ENCODE measurements at regions of chr12 and their contacts with region 1.

Region 1: DNA sequence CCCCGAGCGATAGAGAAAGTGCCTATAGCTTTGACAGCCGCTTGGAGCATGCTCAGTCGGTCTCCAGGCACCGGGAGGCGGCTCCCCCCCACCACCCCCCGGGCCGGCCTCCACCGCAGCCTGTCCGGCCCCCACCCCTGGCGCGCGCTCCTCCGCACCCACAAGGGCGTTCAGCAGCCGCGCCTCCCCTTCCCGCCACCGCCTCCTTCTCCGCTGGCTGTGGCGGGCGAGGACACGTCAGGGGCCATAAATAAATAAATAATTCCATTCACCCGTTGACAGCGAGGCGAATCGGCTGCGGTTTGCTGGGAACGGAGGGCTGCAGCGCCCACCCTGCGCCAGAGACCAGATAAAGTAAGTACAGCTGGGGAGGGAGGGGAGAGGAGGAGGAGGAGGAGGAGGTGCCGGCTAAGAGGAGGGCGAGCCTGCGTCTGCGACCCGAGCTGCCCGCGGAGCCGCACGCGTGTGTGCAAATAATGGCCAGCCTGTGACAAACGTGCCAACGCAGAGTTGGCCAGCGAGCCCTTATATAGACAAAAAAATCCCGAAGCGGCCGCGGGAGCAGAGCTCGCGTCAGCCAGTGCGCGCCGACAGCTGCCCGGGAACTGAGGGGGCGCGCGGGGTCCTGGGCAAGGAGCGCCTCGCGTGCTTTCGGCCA is at the start of gene SLC16A7:
- DNase-seq: peak; percentile 93
- H3K4me3 Mint-ChIP-seq: peak within 1 kb of the TSS; percentile 88
- H3K27ac Mint-ChIP-seq: peak within 1 kb of the TSS; percentile 100
- H3K4me1 Mint-ChIP-seq: peaks cover 42% of the 10 kb centered on the region
- H3K27me3 Mint-ChIP-seq: no peaks in the 10 kb centered on the region
- total RNA-seq, gene SLC16A7: 43.7 and 44.2 TPM in 2 replicates

Region 2: GRCh38 chr12:58425481-58426392 is 1170.3 kb before region 1 on chr12:
- intact Hi-C with region 1: loop called (anchors 2 kb)
- DNase-seq: peak; percentile 72
- H3K4me3 Mint-ChIP-seq: peak overlapping the region; percentile 64
- H3K27ac Mint-ChIP-seq: peak overlapping the region; percentile 89
- H3K4me1 Mint-ChIP-seq: peaks cover 37% of the 10 kb centered on the region
- H3K27me3 Mint-ChIP-seq: peaks cover 36% of the 10 kb centered on the region

Region 3: DNA sequence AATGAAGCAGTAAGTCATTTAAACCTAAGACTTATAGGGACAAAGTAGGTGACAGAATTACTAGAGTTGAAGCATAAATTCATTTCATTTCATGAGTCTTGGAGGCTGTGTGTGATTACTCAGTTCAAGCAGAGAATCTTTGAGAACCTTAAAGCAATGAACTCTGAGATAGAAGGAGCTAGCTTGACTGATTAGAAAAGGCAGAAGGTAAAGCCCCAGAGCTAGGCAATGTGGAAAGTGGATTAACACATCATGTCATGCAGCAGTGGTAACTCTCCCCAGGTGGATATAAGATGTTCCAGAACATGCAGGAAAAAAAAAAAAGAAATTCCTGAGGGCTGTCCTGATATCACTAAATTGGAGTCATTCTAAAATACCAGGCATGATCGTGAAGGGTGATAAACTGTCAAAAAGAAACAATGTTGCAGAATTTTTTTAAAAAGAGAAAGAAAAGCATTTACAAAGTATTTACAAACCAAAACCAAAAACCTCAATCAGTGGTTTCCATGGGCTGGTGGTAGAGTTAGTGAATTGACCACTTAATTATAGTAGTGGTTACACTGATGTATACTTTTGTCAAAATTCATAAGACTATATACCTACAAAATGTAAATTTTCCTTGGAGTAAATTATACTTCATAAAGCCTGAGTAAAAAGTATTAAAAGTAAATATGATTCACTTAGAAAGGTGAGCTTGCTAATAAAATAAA is 12.9 kb before region 1 on chr12:
- intact Hi-C with region 1: loop called (anchors 1 kb)
- DNase-seq: no peak
- H3K4me3 Mint-ChIP-seq: no peak overlapping the region
- H3K27ac Mint-ChIP-seq: no peak overlapping the region
- H3K4me1 Mint-ChIP-seq: peaks cover 17% of the 10 kb centered on the region
- H3K27me3 Mint-ChIP-seq: no peaks in the 10 kb centered on the region

Region 4: DNA sequence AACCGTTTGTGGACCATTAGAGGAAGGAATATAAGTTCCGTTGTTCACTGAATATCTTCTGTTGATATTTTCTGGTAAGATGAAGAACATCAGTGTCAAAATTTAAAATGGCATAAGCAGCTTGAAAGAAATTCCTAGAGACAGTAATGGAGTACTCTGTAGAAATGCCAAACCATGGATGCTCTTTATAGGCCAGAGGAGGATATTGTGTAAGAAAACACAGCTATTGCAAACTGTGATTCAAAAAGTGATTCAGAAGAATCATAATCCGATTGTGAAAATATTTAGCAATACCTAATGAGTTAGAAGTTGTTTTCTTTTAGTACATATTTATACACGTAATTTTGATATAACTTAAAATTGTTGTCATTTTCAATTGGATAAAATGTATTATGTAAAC is 102.6 kb after region 1 on chr12:
- intact Hi-C with region 1: no loop called
- DNase-seq: no peak
- H3K4me3 Mint-ChIP-seq: no peak overlapping the region
- H3K27ac Mint-ChIP-seq: no peak overlapping the region
- H3K4me1 Mint-ChIP-seq: no peaks in the 10 kb centered on the region
- H3K27me3 Mint-ChIP-seq: no peaks in the 10 kb centered on the region

Measured in activated CD4-positive, alpha-beta T cell treated with anti-CD3 and anti-CD28 coated beads, Interleukin-2, amount 10 ng/mL, durations not matched to agents 24 days and 14 days (primary cell).